Dorsolateral prefrontal cortex (tissue), 120 donors: ENCODE measurements at regions of chr7 and their contacts with region 1.

Region 1: GRCh38 chr7:55964261-55965099 is at the start of gene NIPSNAP2:
- DNase-seq: peak in 9 of 10 donors; percentile 24 to 80 (median 54)
- H3K4me3 ChIP-seq: peak within 1 kb of the TSS; percentile 56 to 86 (median 75)
- H3K27ac ChIP-seq: peak within 1 kb of the TSS; percentile 68 to 97 (median 91)
- H3K27me3 ChIP-seq: no peaks in the 10 kb centered on the region
- CTCF ChIP-seq: peak in 47 of 56 donors; percentile 10 to 71 (median 50)
- total RNA-seq, gene NIPSNAP2: 39.1 to 106 (median 67.7) TPM

Region 2: DNA sequence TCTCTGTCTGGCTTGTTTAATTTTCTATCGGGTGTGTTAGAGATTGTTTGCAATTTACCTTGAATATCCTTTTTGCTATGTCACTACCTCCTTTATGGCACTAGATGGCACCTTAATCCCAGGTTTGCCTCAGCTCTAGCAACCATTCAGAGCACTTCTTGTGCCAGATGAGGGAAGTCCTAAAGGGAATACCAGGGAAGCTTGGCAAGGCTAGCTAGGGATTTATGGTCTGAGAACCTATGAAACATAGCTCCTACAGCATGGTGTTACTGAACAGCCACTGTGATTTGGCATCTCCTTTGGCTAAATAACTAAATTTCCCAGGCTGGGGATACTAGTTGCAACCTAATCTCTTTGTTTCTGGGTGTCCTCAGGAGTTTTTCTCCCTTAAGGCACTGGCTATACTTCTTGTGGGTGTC is 323.2 kb before region 1 on chr7:
- intact Hi-C with region 1: loop called in 1 of 2 experiments (anchors 5 kb)
- DNase-seq: peak in 2 of 10 donors; percentile 29 to 36
- H3K4me3 ChIP-seq: no peak overlapping the region
- H3K27ac ChIP-seq: no peak overlapping the region
- H3K27me3 ChIP-seq: peaks cover 0 to 2% (median 0%) of the 10 kb centered on the region in 45 donors
- CTCF ChIP-seq: peak; percentile 22 to 85 (median 66)

Region 3: DNA sequence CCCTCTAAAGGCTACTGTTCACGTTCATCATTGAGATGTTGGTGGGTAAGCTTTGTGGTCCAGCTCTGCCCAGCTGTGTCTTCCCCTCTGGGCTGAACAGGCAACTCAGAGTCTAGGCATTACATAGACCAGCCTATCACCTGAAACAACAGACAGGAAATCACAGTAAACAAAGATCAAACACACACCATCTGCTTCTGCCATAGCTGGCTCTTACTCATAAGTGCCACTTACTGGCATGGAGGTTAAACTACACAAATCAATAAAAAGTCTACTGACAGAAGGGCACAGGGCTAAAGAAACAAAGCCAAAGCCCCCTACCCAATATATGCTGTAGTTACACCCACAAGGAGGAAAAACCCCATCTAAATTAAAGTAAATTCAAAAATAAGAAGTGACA is 136.9 kb before region 1 on chr7:
- intact Hi-C with region 1: no loop called
- DNase-seq: no peak
- H3K4me3 ChIP-seq: no peak overlapping the region
- H3K27ac ChIP-seq: no peak overlapping the region
- H3K27me3 ChIP-seq: no peaks in the 10 kb centered on the region
- CTCF ChIP-seq: no peak

Region 4: GRCh38 chr7:55838595-55838994 is 125.9 kb before region 1 on chr7:
- intact Hi-C with region 1: no loop called
- DNase-seq: no peak
- H3K4me3 ChIP-seq: no peak overlapping the region
- H3K27ac ChIP-seq: no peak overlapping the region
- H3K27me3 ChIP-seq: no peaks in the 10 kb centered on the region
- CTCF ChIP-seq: no peak

Region 5: GRCh38 chr7:55887821-55888247 is 76.6 kb before region 1 on chr7:
- intact Hi-C with region 1: loop called (anchors 5 kb)
- DNase-seq: peak in 1 of 10 donors; percentile 15
- H3K4me3 ChIP-seq: peak overlapping the region; percentile 33 to 90 (median 64)
- H3K27ac ChIP-seq: peak overlapping the region in 49 of 59 donors; percentile 22 to 88 (median 75)
- H3K27me3 ChIP-seq: no peaks in the 10 kb centered on the region
- CTCF ChIP-seq: no peak

Region 6: DNA sequence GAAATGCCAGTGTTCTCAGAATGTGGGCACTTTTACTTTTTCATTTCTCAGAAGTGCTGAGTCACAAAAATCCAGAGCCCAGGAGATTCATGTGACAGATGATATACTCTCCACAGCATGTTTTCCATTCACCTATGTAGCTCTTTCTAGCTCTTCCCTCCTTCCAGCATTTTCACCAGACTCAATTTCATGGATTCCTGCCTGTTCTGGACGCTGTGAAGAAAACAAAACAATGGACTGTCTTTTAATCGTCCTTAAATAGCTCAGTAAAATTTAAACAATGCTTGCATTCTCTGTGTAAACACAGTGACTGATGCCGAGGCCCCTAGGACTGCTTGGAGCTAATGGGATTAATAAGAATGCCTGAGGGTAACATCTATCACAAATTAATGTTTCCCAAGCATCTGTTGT is 51.7 kb before region 1 on chr7:
- intact Hi-C with region 1: loop called in 1 of 2 experiments (anchors 10 kb)
- DNase-seq: no peak
- H3K4me3 ChIP-seq: peak overlapping the region in 21 of 59 donors; percentile 4 to 41 (median 20)
- H3K27ac ChIP-seq: peak overlapping the region in 57 of 59 donors; percentile 33 to 97 (median 80)
- H3K27me3 ChIP-seq: no peaks in the 10 kb centered on the region
- CTCF ChIP-seq: peak in 1 of 56 donors; percentile 10

Region 7: GRCh38 chr7:56009695-56010094 is 45.2 kb after region 1 on chr7:
- intact Hi-C with region 1: loop called in 1 of 2 experiments (anchors 2 kb)
- DNase-seq: peak; percentile 6 to 72 (median 54)
- H3K4me3 ChIP-seq: peak overlapping the region in 10 of 59 donors; percentile 3 to 50 (median 28)
- H3K27ac ChIP-seq: peak overlapping the region in 56 of 59 donors; percentile 1 to 92 (median 78)
- H3K27me3 ChIP-seq: no peaks in the 10 kb centered on the region
- CTCF ChIP-seq: peak in 8 of 56 donors; percentile 10 to 33 (median 18)

Region 8: DNA sequence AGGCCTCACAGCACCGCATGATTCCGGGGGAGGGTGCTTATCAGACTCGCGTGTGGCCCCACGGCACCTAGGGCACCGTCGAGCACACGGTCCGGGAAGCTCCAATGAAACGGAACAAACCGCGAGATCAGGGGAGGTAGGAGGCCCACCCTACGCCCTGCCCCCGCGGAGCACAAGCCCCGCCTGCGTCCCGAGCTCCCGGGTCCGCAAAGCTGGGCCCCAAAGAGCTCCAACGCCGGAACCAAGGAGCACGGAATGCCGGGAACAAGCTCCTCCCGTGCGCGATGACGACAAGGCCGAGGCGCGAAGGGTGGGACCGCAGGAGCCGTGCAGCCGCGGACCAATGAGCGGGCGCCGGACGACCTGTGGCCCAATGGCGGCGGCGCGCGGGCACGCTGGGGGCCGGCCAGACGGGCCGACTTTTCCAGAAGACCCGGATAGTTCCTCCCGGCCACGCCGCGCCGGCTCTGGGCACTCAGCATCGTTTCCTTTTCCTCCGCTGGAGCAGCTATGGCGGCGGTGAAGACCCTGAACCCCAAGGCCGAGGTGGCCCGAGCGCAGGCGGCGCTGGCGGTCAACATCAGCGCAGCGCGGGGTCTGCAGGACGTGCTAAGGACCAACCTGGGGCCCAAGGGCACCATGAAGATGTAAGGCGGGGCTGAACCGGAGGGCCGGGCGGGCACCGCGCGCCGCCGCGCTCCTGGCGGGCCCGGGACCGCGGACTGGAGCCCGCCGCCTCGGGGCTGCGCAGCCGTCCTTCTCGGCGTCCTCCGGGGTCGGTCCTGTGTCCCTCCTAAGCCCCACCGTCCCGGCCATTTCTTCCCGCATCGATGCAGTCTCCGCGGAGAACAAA is 87.1 kb after region 1 on chr7 and contains the starts of genes CCT6A and PSPH:
- intact Hi-C with region 1: loop called in 1 of 2 experiments (anchors 5 kb)
- DNase-seq: peak; percentile 96 to 100 (median 98)
- H3K4me3 ChIP-seq: peak within 1 kb of the TSS; percentile 63 to 100 (median 91)
- H3K27ac ChIP-seq: peak within 1 kb of the TSS; percentile 19 to 98 (median 92)
- H3K27me3 ChIP-seq: no peaks in the 10 kb centered on the region
- CTCF ChIP-seq: peak in 35 of 56 donors; percentile 6 to 58 (median 22)
- total RNA-seq, gene CCT6A: 38.3 to 105 (median 76.0) TPM
- total RNA-seq, gene PSPH: 11.1 to 44.3 (median 20.0) TPM